ENCODE measurements at regions of chr2 and their contacts with region 1.

Region 1: GRCh38 chr2:131682122-131682944 is 154.6 kb downstream of the CCDC74A start:
- DNase-seq: peak; percentile 93
- H3K4me3 Mint-ChIP-seq: peak overlapping the region; percentile 89
- H3K27ac Mint-ChIP-seq: peak overlapping the region; percentile 78
- H3K4me1 Mint-ChIP-seq: peaks cover 39% of the 10 kb centered on the region
- H3K27me3 Mint-ChIP-seq: peaks cover 12% of the 10 kb centered on the region

Region 2: GRCh38 chr2:131425231-131425941 is 256.9 kb before region 1 on chr2:
- intact Hi-C with region 1: loop called (anchors 5 kb)
- DNase-seq: peak; percentile 71
- H3K4me3 Mint-ChIP-seq: peak overlapping the region; percentile 32
- H3K27ac Mint-ChIP-seq: no peak overlapping the region
- H3K4me1 Mint-ChIP-seq: peaks cover 7% of the 10 kb centered on the region
- H3K27me3 Mint-ChIP-seq: peaks cover 68% of the 10 kb centered on the region

Measured in activated CD4-positive, alpha-beta T cell treated with anti-CD3 and anti-CD28 coated beads, Interleukin-2, amount 10 ng/mL, durations not matched to agents 24 days and 14 days (primary cell).